ENCODE measurements at regions of chr17 and their contacts with region 1.

Region 1: DNA sequence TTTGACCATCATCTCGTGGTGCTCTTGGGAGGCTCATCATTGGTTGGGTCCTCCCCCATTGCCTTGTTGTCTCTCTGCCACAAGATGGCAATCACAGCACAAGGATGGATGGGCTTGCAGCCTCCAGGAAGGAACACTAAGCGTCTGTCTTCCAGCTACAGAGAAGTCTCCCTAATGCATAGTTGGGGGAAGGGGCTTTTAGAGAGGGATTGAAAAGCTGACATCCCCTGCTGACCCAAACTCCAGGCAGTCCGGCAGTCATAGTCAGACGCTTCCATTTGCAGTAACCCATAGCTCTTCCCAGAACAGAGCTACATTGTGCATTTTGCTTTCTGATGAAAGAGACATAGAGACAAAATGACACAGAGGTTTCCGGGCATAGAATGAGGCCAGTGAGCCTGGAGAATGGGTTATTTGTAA is 111.4 kb downstream of the UTP18 start:
- DNase-seq: peak; percentile 41 to 57 (median 47)
- H3K4me3 ChIP-seq: no peak overlapping the region
- H3K4me3 Mint-ChIP-seq: peak overlapping the region in 3 of 8 donors; percentile 40 to 67 (median 40)
- H3K27ac ChIP-seq: no peak overlapping the region
- H3K27ac Mint-ChIP-seq: peak overlapping the region in 4 of 7 donors; percentile 1 to 48 (median 28)
- H3K4me1 ChIP-seq: peaks cover 11% of the 10 kb centered on the region
- H3K4me1 Mint-ChIP-seq: peaks cover 7 to 12% (median 11%) of the 10 kb centered on the region in 4 donors
- H3K27me3 ChIP-seq: no peaks in the 10 kb centered on the region
- H3K27me3 Mint-ChIP-seq: peaks cover 0 to 2% of the 10 kb centered on the region in 2 donors

Region 2: GRCh38 chr17:51298508-51299371 is 73.0 kb before region 1 on chr17:
- CTCF ChIA-PET with region 1: no interaction called
- POLR2A ChIA-PET with region 1: no interaction called
- intact Hi-C with region 1: no loop called
- DNase-seq: peak in 4 of 5 donors; percentile 12 to 16 (median 13)
- H3K4me3 ChIP-seq: no peak overlapping the region
- H3K4me3 Mint-ChIP-seq: no peak overlapping the region
- H3K27ac ChIP-seq: no peak overlapping the region
- H3K27ac Mint-ChIP-seq: no peak overlapping the region
- H3K4me1 ChIP-seq: no peaks in the 10 kb centered on the region
- H3K4me1 Mint-ChIP-seq: peaks cover 0 to 7% (median 0%) of the 10 kb centered on the region in 4 donors
- H3K27me3 ChIP-seq: no peaks in the 10 kb centered on the region
- H3K27me3 Mint-ChIP-seq: no peaks in the 10 kb centered on the region

Region 3: GRCh38 chr17:51435641-51436091 is 63.9 kb after region 1 on chr17:
- CTCF ChIA-PET with region 1: interaction called, 21 read pairs
- POLR2A ChIA-PET with region 1: no interaction called
- intact Hi-C with region 1: loop called (anchors 1 kb)
- DNase-seq: peak; percentile 29 to 74 (median 40)
- H3K4me3 ChIP-seq: peak overlapping the region in 1 of 2 donors; percentile 20
- H3K4me3 Mint-ChIP-seq: peak overlapping the region; percentile 33 to 87 (median 75)
- H3K27ac ChIP-seq: peak overlapping the region; percentile 15
- H3K27ac Mint-ChIP-seq: peak overlapping the region; percentile 54 to 93 (median 74)
- H3K4me1 ChIP-seq: peaks cover 60% of the 10 kb centered on the region
- H3K4me1 Mint-ChIP-seq: peaks cover 27 to 67% (median 45%) of the 10 kb centered on the region in 4 donors
- H3K27me3 ChIP-seq: no peaks in the 10 kb centered on the region
- H3K27me3 Mint-ChIP-seq: no peaks in the 10 kb centered on the region

Region 4: DNA sequence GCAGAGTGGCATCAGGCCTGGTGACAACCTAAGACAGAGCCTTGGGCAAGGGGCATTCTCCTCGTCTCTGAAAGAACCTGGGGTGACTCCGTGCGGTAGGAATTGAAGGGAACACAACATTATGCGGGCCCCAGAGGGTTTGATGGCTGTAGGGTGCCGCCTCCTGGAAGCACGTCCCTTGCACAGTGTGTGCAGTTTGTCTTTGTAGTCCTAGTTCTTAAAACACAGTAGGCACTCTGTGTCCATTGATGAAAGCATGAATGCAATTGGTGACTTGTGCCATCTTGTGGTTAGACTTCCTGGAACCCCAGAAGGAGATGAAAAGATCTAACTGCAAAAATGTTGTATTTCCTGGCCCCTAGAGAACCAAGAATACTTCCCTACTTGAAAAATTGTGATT is 168.4 kb after region 1 on chr17:
- CTCF ChIA-PET with region 1: interaction called, 8 read pairs
- POLR2A ChIA-PET with region 1: no interaction called
- intact Hi-C with region 1: loop called (anchors 1 kb)
- DNase-seq: peak in 2 of 5 donors; percentile 3 to 8
- H3K4me3 ChIP-seq: no peak overlapping the region
- H3K4me3 Mint-ChIP-seq: no peak overlapping the region
- H3K27ac ChIP-seq: no peak overlapping the region
- H3K27ac Mint-ChIP-seq: no peak overlapping the region
- H3K4me1 ChIP-seq: peaks cover 8% of the 10 kb centered on the region
- H3K4me1 Mint-ChIP-seq: peaks cover 6 to 12% (median 9%) of the 10 kb centered on the region in 4 donors
- H3K27me3 ChIP-seq: no peaks in the 10 kb centered on the region
- H3K27me3 Mint-ChIP-seq: peaks cover 0 to 3% of the 10 kb centered on the region in 2 donors

Region 5: GRCh38 chr17:51734462-51734861 is 362.7 kb after region 1 on chr17:
- CTCF ChIA-PET with region 1: interaction called, 22 read pairs
- POLR2A ChIA-PET with region 1: no interaction called
- intact Hi-C with region 1: no loop called
- DNase-seq: no peak
- H3K4me3 ChIP-seq: no peak overlapping the region
- H3K4me3 Mint-ChIP-seq: no peak overlapping the region
- H3K27ac ChIP-seq: no peak overlapping the region
- H3K27ac Mint-ChIP-seq: no peak overlapping the region
- H3K4me1 ChIP-seq: no peaks in the 10 kb centered on the region
- H3K4me1 Mint-ChIP-seq: no peaks in the 10 kb centered on the region
- H3K27me3 ChIP-seq: no peaks in the 10 kb centered on the region
- H3K27me3 Mint-ChIP-seq: peaks cover 0 to 10% of the 10 kb centered on the region in 2 donors

Region 6: DNA sequence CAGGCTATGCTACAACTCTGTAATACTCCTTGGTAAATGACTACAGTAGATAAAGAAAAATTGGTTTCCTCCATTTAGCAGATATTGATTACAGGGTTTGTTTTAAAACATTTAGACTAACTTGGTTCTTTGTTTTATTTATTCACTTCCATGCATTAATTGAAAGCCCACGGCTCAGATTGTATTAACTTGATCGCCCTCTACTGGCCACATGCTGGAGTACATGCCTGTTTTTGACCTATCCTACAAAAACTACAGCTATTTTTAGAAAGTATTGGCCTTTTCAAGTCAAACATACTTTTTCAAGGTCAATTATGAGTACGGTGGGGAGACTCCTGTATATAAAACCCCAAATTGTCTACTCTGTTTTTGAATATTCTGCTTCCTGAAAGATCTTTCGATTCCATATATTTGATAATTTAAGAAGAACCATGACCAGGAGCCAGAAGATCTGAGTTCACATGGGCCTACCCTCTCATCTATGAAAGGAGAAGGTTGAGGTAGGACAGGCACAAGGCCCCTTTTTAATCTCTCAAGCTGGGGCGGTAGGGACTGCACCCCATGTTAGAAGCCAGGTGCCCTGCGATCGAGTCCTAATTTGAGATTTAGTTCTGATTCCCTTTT is 735.0 kb after region 1 on chr17:
- CTCF ChIA-PET with region 1: interaction called, 23 read pairs
- POLR2A ChIA-PET with region 1: no interaction called
- intact Hi-C with region 1: no loop called
- DNase-seq: peak in 4 of 5 donors; percentile 5 to 37 (median 10)
- H3K4me3 ChIP-seq: no peak overlapping the region
- H3K4me3 Mint-ChIP-seq: no peak overlapping the region
- H3K27ac ChIP-seq: no peak overlapping the region
- H3K27ac Mint-ChIP-seq: no peak overlapping the region
- H3K4me1 ChIP-seq: no peaks in the 10 kb centered on the region
- H3K4me1 Mint-ChIP-seq: no peaks in the 10 kb centered on the region
- H3K27me3 ChIP-seq: no peaks in the 10 kb centered on the region
- H3K27me3 Mint-ChIP-seq: peaks cover 1 to 2% of the 10 kb centered on the region in 2 donors

Measured in CD4-positive, alpha-beta memory T cell (primary cell).